BJ (cell line): ENCODE measurements at regions of chr16 and their contacts with region 1.

Region 1: GRCh38 chr16:29784901-29785500 is 5.5 kb upstream of the KIF22 start:
- DNase-seq: no peak
- H3K4me3 ChIP-seq: 0 out of 2 replicates have a peak overlapping the region, but pooled peaks have one; percentile 2
- H3K27me3 ChIP-seq: peaks cover 4% of the 10 kb centered on the region; the same call in 1 of the 2 replicates
- CTCF ChIP-seq: peak; percentile 86

Region 2: DNA sequence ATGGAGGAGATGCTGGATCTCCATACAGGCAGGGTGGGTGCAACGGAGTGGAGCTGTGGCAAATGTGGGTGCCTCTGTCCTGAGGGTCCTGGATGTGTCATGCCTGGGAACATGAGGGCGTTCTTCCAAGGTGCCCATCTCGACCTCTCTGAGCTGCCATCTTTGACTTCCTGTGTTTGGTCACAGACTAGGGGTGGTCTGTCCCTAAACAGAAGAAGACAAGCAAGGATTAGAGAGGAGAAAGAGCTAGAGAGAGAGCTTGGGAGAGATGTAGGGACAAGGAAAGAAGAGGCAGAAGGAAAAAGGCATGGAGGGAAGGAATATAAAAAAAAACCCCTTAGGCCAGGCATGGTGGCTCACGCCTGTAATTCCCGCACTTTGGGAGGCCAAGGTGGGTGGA is 10.3 kb before region 1 on chr16:
- CTCF ChIA-PET with region 1: interaction called, 11 read pairs
- POLR2A ChIA-PET with region 1: no interaction called
- DNase-seq: no peak
- H3K4me3 ChIP-seq: no peak overlapping the region
- H3K27me3 ChIP-seq: peaks cover 6% of the 10 kb centered on the region
- CTCF ChIP-seq: no peak

Region 3: GRCh38 chr16:29825145-29826044 is 40.4 kb after region 1 on chr16:
- CTCF ChIA-PET with region 1: interaction called, 5 read pairs
- POLR2A ChIA-PET with region 1: interaction called, 15 read pairs
- DNase-seq: no peak
- H3K4me3 ChIP-seq: no peak overlapping the region
- H3K27me3 ChIP-seq: no peaks in the 10 kb centered on the region
- CTCF ChIP-seq: no peak

Region 4: DNA sequence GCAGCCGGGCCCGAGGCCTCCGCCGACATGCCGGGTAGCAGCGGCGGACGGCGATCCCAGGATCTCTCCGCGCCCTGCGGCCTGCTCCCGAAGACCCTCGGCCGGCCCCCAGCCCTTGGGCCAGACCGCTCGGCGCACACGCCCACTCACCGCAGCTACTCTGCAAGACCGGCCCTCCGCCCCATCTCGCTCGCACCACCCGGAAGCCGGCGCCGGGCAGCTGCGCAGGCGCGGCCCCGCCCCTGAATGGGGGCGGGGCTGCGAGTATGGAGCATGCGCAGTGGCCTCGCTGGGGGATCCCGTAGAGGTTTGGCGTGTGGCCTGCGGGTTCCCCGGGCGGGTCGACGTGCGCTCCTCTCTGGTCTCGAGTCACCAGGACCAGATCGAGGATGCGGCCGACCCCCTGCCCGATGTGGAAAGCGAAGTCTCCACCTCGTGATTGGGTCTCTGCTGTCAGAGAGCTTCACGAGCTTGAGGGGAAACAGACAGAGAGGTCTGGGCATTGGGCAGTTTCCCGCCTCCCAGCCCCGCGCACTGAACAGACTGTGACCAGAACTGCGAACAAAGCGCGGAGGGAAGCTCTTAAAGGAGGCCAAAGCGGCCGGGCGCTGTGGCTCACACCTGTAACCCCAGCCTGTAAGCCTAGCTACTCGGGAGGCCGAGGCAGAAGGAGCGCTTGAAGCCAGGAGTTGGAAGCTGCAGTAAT is 141.2 kb after region 1 on chr16 and contains the start of gene KCTD13:
- CTCF ChIA-PET with region 1: no interaction called
- POLR2A ChIA-PET with region 1: no interaction called
- DNase-seq: peak; percentile 30
- H3K4me3 ChIP-seq: peak within 1 kb of the TSS; percentile 64
- H3K27me3 ChIP-seq: no peaks in the 10 kb centered on the region
- CTCF ChIP-seq: no peak
- polyA plus RNA-seq, gene KCTD13: 8.2 and 12.3 TPM in 2 replicates

Region 5: DNA sequence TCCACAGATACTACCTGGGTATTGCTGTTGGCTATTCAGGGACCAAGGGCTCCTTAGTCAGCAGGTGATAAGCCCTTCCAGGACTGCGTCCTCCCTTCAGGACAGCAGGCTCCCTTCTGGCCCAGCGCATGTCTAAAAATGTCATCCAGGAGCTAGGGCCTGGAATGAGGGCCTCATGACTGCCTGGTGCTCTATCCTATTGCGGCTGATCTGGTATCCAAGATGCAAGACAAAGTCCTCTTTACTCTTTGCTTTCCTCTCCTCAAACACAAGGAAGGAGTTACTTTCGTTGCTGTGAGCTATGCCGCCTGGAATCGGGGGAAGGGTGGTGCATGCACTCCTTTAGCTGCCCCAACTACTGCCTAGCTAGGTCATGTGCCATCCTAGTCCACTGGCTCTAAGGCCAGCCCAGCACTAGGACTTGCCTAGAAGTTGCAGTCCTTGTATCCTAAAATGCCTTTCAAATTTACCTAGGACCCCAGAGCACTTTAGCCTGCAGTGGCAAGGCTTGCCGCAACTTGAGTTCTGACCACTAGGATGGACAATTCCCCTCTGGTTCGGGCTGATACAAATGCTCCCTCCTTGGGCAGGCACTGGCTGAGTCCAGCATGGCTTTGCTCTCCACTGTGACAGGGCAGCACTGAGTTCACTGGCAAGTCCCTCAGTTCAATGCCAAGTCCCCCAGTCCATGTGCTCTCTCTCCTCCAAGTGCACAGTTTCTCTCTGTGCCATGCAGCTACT is 166.8 kb after region 1 on chr16:
- CTCF ChIA-PET with region 1: no interaction called
- POLR2A ChIA-PET with region 1: no interaction called
- DNase-seq: no peak
- H3K4me3 ChIP-seq: no peak overlapping the region
- H3K27me3 ChIP-seq: no peaks in the 10 kb centered on the region
- CTCF ChIP-seq: no peak